ENCODE measurements at regions of chr1 and their contacts with region 1.

Region 1: GRCh38 chr1:110780600-110781484 is 92.1 kb upstream of the CD53 start:
- DNase-seq: peak; percentile 65
- ATAC-seq: peak; percentile 74

Region 2: GRCh38 chr1:110524311-110525251 is 256.3 kb before region 1 on chr1:
- intact Hi-C with region 1: loop called in 1 of 2 experiments (anchors 10 kb)
- DNase-seq: peak; percentile 28
- ATAC-seq: peak; percentile 45

Region 3: DNA sequence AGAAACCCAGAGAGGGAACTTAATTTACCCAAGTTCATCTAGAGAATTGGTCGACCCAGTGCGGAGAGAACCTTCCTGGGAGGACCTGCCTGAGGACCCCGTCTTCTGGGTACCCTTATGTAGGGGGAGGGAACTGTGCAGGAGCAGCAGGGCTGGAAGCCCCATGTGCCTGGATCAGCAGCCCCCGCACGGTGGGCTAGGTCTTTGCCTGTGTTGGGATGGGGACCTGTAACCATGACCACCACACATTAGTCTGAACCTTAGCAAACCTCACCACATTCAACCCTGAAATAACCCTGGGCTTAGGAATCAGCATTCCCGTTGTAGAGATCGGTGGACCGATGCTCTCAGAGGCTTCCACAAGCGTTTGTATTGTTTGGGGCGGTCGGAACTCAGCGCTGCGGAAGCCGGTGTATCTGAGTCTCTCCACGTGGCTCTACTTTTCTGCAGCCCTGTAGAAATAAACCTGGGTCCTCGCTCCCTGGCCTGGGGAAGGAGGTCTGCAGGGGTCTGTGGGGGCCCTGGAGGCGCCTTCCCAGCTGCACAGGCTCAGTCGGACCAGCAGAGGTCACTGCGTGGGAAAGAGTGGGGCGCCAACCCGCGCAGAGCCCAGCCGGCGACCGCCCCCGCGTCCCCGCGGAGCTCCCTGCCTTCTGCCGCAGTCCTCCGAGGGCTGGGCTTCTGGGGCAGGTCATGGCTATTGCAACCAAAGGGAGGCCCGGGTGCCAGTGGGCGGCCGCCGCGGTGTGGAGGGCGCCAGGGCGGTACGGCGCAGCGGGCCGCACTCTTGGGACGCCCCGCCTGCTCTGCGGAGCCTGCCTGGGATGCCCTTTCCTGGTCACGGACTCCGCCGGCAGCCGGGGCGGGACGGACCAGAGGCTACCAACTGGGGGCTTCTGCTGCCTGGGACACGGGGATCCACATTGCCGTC is 225.7 kb before region 1 on chr1:
- intact Hi-C with region 1: loop called (anchors 10 kb)
- DNase-seq: peak; percentile 67
- ATAC-seq: peak; percentile 90

Region 4: GRCh38 chr1:110619412-110620249 is 161.2 kb before region 1 on chr1:
- intact Hi-C with region 1: loop called (anchors 2 to 5 kb)
- DNase-seq: peak; percentile 92
- ATAC-seq: peak; percentile 89 to 95

Region 5: GRCh38 chr1:110630839-110631663 is 149.8 kb before region 1 on chr1:
- intact Hi-C with region 1: loop called (anchors 5 kb)
- DNase-seq: peak; percentile 83
- ATAC-seq: peak; percentile 56 to 65

Region 6: GRCh38 chr1:110872366-110872744 is 91.5 kb after region 1 on chr1:
- intact Hi-C with region 1: no loop called
- DNase-seq: no peak
- ATAC-seq: no peak

Measured in left cardiac atrium (tissue), 4 donors.